Naive thymus-derived CD4-positive, alpha-beta T cell (primary cell): ENCODE measurements at regions of chr22 and their contacts with region 1.

Region 1: DNA sequence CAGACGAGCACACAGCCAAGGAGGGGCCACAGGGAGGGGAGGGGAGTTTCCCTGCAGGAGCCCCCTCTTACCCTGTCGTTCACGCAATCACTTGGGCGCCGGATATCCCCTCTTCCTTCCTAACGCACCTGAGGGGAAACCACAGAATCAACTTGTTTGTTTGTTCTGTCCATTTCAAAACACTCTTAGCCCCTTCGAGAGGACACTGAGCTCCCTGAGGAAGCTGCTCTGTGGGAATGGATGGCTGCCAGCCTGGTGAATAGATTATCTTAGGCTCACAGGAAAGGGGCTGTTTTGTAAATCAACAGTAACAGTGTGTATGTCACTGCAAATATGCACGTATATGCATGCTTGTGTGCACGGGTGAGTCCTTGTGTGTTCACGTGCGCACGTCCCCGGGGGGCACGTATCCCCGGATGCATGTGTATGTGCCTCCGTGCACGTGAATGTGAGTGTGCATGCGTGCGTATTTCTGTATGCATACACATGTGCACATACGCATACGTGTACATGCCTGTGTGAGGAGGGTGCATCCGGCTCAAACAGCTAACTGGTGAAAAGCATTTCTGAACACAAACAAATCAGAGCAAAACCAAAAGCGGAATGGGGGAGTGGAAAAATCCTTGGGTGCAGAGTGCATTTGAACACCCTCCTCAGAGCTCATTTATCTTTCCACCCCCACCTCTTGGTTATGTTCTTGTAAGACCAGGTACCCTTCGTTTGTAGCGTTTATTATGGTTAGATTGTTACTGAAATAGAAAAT is 7.2 kb downstream of the ARSA start:
- DNase-seq: peak; percentile 61 to 95 (median 88)
- ATAC-seq: peak; percentile 88
- H3K4me3 ChIP-seq: peak overlapping the region; percentile 68
- H3K4me3 Mint-ChIP-seq: peak overlapping the region; percentile 81 to 97 (median 93)
- H3K27ac ChIP-seq: peak overlapping the region; percentile 93
- H3K27ac Mint-ChIP-seq: peak overlapping the region; percentile 93 to 100 (median 99)
- H3K4me1 ChIP-seq: peaks cover 17 to 27% of the 10 kb centered on the region in 2 donors
- H3K4me1 Mint-ChIP-seq: peaks cover 10 to 40% (median 33%) of the 10 kb centered on the region in 7 donors
- H3K27me3 ChIP-seq: no peaks in the 10 kb centered on the region
- H3K27me3 Mint-ChIP-seq: no peaks in the 10 kb centered on the region

Region 2: DNA sequence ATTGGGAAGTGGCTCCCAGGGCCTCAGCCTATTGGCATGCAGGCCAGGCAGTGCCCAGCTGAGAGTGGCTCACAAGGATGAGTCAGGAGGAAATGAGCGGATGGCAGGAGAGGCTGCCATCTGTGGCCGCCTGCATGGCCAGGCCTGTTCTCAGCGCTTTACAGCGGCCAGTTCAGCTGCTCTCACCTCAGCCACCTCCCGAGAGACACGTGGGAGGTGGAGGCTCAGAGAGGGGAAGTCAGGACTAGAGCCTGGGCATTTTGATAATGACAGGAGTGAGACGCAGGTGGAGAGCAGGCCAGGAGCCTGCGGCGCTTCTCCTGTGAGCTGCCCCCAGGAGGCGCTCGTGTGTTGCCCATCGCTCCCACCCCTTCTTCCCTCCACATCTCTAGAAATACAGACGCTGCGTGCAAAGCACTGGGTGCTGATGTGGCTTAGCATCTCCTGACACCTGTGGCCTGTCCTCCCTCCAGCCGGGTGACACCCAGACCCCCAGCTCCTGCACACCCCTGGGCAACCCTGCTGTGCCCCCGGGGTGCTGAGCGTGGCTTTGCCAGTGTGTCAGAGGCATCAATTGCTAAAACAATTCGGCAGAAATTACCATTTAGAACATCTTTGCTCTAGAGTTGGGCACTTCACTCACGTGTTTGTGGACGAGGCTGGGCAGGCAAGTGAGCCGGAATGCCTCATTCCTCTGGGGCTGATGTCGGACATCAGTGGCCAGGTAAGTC is 471.6 kb before region 1 on chr22:
- CTCF ChIA-PET with region 1: no interaction called
- POLR2A ChIA-PET with region 1: no interaction called
- intact Hi-C with region 1: loop called in 1 of 2 experiments (anchors 1 kb)
- DNase-seq: peak; percentile 61 to 80 (median 70)
- ATAC-seq: peak; percentile 96
- H3K4me3 ChIP-seq: no peak overlapping the region
- H3K4me3 Mint-ChIP-seq: no peak overlapping the region
- H3K27ac ChIP-seq: no peak overlapping the region
- H3K27ac Mint-ChIP-seq: no peak overlapping the region
- H3K4me1 ChIP-seq: no peaks in the 10 kb centered on the region
- H3K4me1 Mint-ChIP-seq: peaks cover 0 to 4% (median 0%) of the 10 kb centered on the region in 7 donors
- H3K27me3 ChIP-seq: no peaks in the 10 kb centered on the region
- H3K27me3 Mint-ChIP-seq: peaks cover 0 to 6% (median 0%) of the 10 kb centered on the region in 5 donors

Region 3: DNA sequence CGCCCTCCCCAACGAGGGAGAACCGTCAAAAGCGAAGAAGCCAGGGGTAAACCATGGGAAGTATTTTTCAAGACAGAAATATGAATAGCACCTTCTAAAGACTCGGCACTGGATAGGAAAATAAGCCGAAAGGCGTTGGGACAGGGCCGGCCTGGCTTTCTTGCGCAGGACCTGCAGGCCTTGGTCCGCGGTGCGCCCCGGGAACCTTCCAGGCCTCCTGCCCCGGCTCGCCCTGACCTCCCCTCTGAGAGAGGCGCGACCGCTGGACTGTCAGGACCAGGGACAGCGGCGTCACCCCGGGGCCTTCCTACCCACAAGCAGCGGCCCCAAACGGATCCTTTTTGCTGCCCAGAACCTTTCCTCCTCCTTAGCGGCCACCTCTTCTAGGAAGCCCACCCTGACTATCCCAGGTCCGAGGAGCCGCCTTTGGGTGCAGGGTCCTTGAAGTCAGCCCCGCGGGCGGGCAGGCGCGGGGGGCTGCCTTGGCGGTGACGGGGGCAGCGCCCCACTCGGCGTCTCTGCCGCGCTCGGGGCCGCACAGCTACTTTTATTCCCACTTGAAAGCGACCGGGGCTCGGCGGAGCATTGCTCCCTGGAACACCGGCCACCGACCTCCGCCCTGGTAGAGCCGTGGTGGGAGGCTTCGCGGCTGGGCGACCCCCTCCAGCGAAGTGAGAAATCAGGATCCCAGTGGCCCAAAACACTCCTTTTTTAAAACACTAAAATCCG is 349.9 kb before region 1 on chr22:
- CTCF ChIA-PET with region 1: interaction called, 3 read pairs
- POLR2A ChIA-PET with region 1: interaction called, 8 read pairs
- intact Hi-C with region 1: loop called (anchors 1 to 2 kb)
- DNase-seq: peak; percentile 44 to 80 (median 67)
- ATAC-seq: peak; percentile 72
- H3K4me3 ChIP-seq: peak overlapping the region; percentile 68
- H3K4me3 Mint-ChIP-seq: peak overlapping the region; percentile 56 to 82 (median 74)
- H3K27ac ChIP-seq: peak overlapping the region; percentile 23
- H3K27ac Mint-ChIP-seq: peak overlapping the region in 2 of 9 donors; percentile 33 to 48
- H3K4me1 ChIP-seq: peaks cover 3 to 18% of the 10 kb centered on the region in 2 donors
- H3K4me1 Mint-ChIP-seq: peaks cover 5 to 20% (median 13%) of the 10 kb centered on the region in 7 donors
- H3K27me3 ChIP-seq: no peaks in the 10 kb centered on the region
- H3K27me3 Mint-ChIP-seq: peaks cover 0 to 16% (median 0%) of the 10 kb centered on the region in 5 donors

Region 4: DNA sequence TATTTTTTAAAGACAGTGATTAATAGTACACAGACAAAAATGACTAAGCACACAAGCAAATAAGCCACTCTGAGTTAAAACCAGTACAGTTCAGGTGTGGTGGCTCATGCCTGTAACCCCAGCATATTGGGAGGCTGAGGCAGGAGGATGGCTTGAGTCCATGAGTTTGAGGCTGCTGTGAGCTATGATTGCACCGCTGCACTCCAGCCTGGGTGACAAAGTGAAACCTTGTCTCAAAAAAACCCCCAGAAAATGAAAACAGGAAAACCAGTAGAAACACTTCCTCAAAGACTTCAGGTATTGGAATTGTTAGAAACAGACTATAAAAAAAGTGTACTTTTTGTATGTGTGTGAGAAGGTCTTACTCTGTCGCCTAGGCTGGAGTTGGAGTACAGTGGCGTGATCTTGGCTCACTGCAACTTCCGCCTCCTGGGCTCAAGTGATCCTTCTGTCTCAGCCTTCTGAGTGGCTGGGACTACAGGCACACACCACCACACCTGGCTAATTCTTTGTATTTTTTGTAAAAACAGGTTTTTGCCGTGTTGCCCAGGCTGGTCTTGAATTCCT is 244.6 kb before region 1 on chr22:
- CTCF ChIA-PET with region 1: no interaction called
- POLR2A ChIA-PET with region 1: no interaction called
- intact Hi-C with region 1: no loop called
- DNase-seq: no peak
- ATAC-seq: no peak
- H3K4me3 ChIP-seq: no peak overlapping the region
- H3K4me3 Mint-ChIP-seq: peak overlapping the region in 6 of 10 donors; percentile 30 to 56 (median 41)
- H3K27ac ChIP-seq: no peak overlapping the region
- H3K27ac Mint-ChIP-seq: peak overlapping the region in 8 of 9 donors; percentile 7 to 83 (median 68)
- H3K4me1 ChIP-seq: peaks cover 0 to 6% of the 10 kb centered on the region in 2 donors
- H3K4me1 Mint-ChIP-seq: peaks cover 0 to 22% (median 13%) of the 10 kb centered on the region in 7 donors
- H3K27me3 ChIP-seq: no peaks in the 10 kb centered on the region
- H3K27me3 Mint-ChIP-seq: no peaks in the 10 kb centered on the region

Region 5: DNA sequence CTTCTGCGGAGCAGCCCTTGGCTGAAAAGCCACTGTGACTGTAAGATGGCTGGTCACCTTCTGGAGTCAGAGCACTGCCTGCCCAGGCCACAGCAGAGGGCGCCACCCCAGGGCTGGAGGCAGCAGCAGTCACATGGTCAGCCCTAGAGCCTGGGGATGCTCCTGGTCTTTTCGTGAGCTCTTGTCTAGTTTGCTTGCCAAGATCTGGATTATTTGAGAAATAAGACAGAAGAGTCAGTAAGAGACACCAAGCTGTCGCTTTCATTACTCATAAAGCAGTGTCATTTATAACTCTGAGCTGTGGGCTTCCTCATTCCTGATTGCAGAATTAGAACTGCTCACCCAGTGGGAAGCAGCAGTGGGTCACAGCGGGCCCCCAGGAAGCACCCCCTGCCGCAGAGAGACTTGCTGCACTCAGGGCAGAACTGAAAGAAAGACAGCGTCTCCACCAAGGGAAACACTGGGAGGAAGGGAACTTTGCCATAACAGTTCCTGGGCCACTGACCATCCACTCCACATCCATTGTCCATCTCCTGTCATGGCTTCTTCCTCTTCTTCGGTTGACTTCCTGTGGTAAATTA is 220.9 kb before region 1 on chr22:
- CTCF ChIA-PET with region 1: interaction called, 6 read pairs
- POLR2A ChIA-PET with region 1: no interaction called
- intact Hi-C with region 1: loop called in 1 of 2 experiments (anchors 1 kb)
- DNase-seq: peak in 1 of 9 donors; percentile 34
- ATAC-seq: peak; percentile 78
- H3K4me3 ChIP-seq: no peak overlapping the region
- H3K4me3 Mint-ChIP-seq: peak overlapping the region in 1 of 10 donors; percentile 24
- H3K27ac ChIP-seq: peak overlapping the region; percentile 40
- H3K27ac Mint-ChIP-seq: peak overlapping the region; percentile 31 to 85 (median 66)
- H3K4me1 ChIP-seq: peaks cover 0 to 6% of the 10 kb centered on the region in 2 donors
- H3K4me1 Mint-ChIP-seq: peaks cover 19 to 45% (median 34%) of the 10 kb centered on the region in 7 donors
- H3K27me3 ChIP-seq: no peaks in the 10 kb centered on the region
- H3K27me3 Mint-ChIP-seq: no peaks in the 10 kb centered on the region

Region 6: GRCh38 chr22:50507991-50508884 is 112.5 kb before region 1 on chr22 and contains the start of gene NCAPH2:
- CTCF ChIA-PET with region 1: interaction called, 5 read pairs
- POLR2A ChIA-PET with region 1: interaction called, 50 read pairs
- intact Hi-C with region 1: loop called (anchors 1 kb)
- DNase-seq: peak; percentile 95 to 99 (median 97)
- ATAC-seq: peak; percentile 86
- H3K4me3 ChIP-seq: peak within 1 kb of the TSS; percentile 91
- H3K4me3 Mint-ChIP-seq: peak within 1 kb of the TSS; percentile 88 to 97 (median 94)
- H3K27ac ChIP-seq: peak within 1 kb of the TSS; percentile 99
- H3K27ac Mint-ChIP-seq: peak within 1 kb of the TSS; percentile 89 to 99 (median 98)
- H3K4me1 ChIP-seq: peaks cover 19 to 26% of the 10 kb centered on the region in 2 donors
- H3K4me1 Mint-ChIP-seq: peaks cover 14 to 33% (median 27%) of the 10 kb centered on the region in 7 donors
- H3K27me3 ChIP-seq: no peaks in the 10 kb centered on the region
- H3K27me3 Mint-ChIP-seq: no peaks in the 10 kb centered on the region
- total RNA-seq, gene NCAPH2: 74.3 to 135 (median 91.1) TPM

Region 7: GRCh38 chr22:50544078-50544745 is 76.6 kb before region 1 on chr22:
- CTCF ChIA-PET with region 1: interaction called, 9 read pairs
- POLR2A ChIA-PET with region 1: interaction called, 46 read pairs
- intact Hi-C with region 1: loop called (anchors 1 kb)
- DNase-seq: peak; percentile 60 to 80 (median 71)
- ATAC-seq: peak; percentile 63
- H3K4me3 ChIP-seq: peak overlapping the region; percentile 67
- H3K4me3 Mint-ChIP-seq: peak overlapping the region; percentile 53 to 77 (median 70)
- H3K27ac ChIP-seq: peak overlapping the region; percentile 45
- H3K27ac Mint-ChIP-seq: peak overlapping the region in 6 of 9 donors; percentile 49 to 93 (median 75)
- H3K4me1 ChIP-seq: peaks cover 33 to 40% of the 10 kb centered on the region in 2 donors
- H3K4me1 Mint-ChIP-seq: peaks cover 31 to 59% (median 36%) of the 10 kb centered on the region in 7 donors
- H3K27me3 ChIP-seq: no peaks in the 10 kb centered on the region
- H3K27me3 Mint-ChIP-seq: no peaks in the 10 kb centered on the region

Region 8: GRCh38 chr22:50691521-50691920 is 70.7 kb after region 1 on chr22:
- CTCF ChIA-PET with region 1: interaction called, 3 read pairs
- POLR2A ChIA-PET with region 1: no interaction called
- intact Hi-C with region 1: loop called in 1 of 2 experiments (anchors 1 kb)
- DNase-seq: peak in 6 of 9 donors; percentile 16 to 45 (median 34)
- ATAC-seq: no peak
- H3K4me3 ChIP-seq: no peak overlapping the region
- H3K4me3 Mint-ChIP-seq: no peak overlapping the region
- H3K27ac ChIP-seq: no peak overlapping the region
- H3K27ac Mint-ChIP-seq: no peak overlapping the region
- H3K4me1 ChIP-seq: no peaks in the 10 kb centered on the region
- H3K4me1 Mint-ChIP-seq: peaks cover 0 to 7% (median 0%) of the 10 kb centered on the region in 7 donors
- H3K27me3 ChIP-seq: no peaks in the 10 kb centered on the region
- H3K27me3 Mint-ChIP-seq: peaks cover 0 to 23% (median 0%) of the 10 kb centered on the region in 5 donors